Naive thymus-derived CD4-positive, alpha-beta T cell (primary cell): ENCODE measurements at regions of chr20 and their contacts with region 1.

Region 1: GRCh38 chr20:35771689-35772562 is at the start of gene PHF20:
- DNase-seq: peak; percentile 98 to 100 (median 99)
- ATAC-seq: peak; percentile 90
- H3K4me3 ChIP-seq: peak within 1 kb of the TSS; percentile 59
- H3K4me3 Mint-ChIP-seq: peak within 1 kb of the TSS; percentile 84 to 97 (median 94)
- H3K27ac ChIP-seq: peak within 1 kb of the TSS; percentile 98
- H3K27ac Mint-ChIP-seq: peak within 1 kb of the TSS; percentile 96 to 100 (median 100)
- H3K4me1 ChIP-seq: peaks cover 76 to 78% of the 10 kb centered on the region in 2 donors
- H3K4me1 Mint-ChIP-seq: peaks cover 52 to 88% (median 74%) of the 10 kb centered on the region in 7 donors
- H3K27me3 ChIP-seq: no peaks in the 10 kb centered on the region
- H3K27me3 Mint-ChIP-seq: no peaks in the 10 kb centered on the region
- total RNA-seq, gene PHF20: 57.5 to 157 (median 78.0) TPM

Region 2: GRCh38 chr20:35726759-35727711 is 44.9 kb before region 1 on chr20:
- CTCF ChIA-PET with region 1: no interaction called
- POLR2A ChIA-PET with region 1: interaction called, 5 read pairs
- intact Hi-C with region 1: loop called in 1 of 2 experiments (anchors 10 kb)
- DNase-seq: no peak
- ATAC-seq: no peak
- H3K4me3 ChIP-seq: no peak overlapping the region
- H3K4me3 Mint-ChIP-seq: peak overlapping the region in 1 of 10 donors; percentile 8
- H3K27ac ChIP-seq: no peak overlapping the region
- H3K27ac Mint-ChIP-seq: peak overlapping the region in 2 of 9 donors; percentile 26 to 43
- H3K4me1 ChIP-seq: peaks cover 19 to 35% of the 10 kb centered on the region in 2 donors
- H3K4me1 Mint-ChIP-seq: peaks cover 15 to 67% (median 46%) of the 10 kb centered on the region in 7 donors
- H3K27me3 ChIP-seq: no peaks in the 10 kb centered on the region
- H3K27me3 Mint-ChIP-seq: no peaks in the 10 kb centered on the region

Region 3: GRCh38 chr20:35796571-35796970 is 24.6 kb after region 1 on chr20:
- CTCF ChIA-PET with region 1: no interaction called
- POLR2A ChIA-PET with region 1: interaction called, 4 read pairs
- intact Hi-C with region 1: loop called in 1 of 2 experiments (anchors 2 kb)
- DNase-seq: peak in 6 of 9 donors; percentile 18 to 69 (median 65)
- ATAC-seq: peak; percentile 90
- H3K4me3 ChIP-seq: no peak overlapping the region
- H3K4me3 Mint-ChIP-seq: peak overlapping the region in 8 of 10 donors; percentile 23 to 68 (median 52)
- H3K27ac ChIP-seq: peak overlapping the region; percentile 82
- H3K27ac Mint-ChIP-seq: peak overlapping the region; percentile 13 to 99 (median 94)
- H3K4me1 ChIP-seq: peaks cover 7 to 29% of the 10 kb centered on the region in 2 donors
- H3K4me1 Mint-ChIP-seq: peaks cover 8 to 61% (median 52%) of the 10 kb centered on the region in 7 donors
- H3K27me3 ChIP-seq: no peaks in the 10 kb centered on the region
- H3K27me3 Mint-ChIP-seq: no peaks in the 10 kb centered on the region